ENCODE measurements at regions of chr12 and their contacts with region 1.

Region 1: DNA sequence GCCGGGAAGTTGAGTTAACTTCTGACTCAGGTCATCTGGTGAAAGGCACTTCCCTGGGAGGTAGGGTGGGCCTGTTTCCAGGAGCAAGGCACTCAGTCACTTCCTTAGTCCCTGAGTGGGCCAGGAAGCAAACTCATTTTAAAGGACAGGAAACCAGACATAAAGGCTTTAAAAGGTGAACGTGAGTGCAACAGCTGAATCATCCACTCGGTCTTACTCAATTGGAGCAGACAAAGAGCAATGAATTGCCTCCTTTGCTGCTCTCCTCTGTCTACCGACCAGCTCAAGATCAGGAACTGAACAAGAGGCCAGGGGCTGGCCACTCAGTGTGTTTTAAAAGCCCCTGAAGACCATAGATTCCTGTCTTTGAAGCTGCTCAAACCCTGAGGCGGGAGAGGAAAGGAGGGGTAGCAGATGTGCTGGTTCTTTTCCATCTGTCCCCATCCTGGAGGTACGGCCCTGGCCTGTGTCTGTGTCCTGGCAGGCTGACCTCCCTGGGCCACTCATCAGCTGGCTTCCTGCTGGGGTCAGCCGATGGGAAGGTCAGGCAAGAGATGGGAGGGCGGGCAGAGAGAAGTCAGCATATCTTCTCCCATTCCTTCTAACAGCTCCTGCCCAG is 148.9 kb downstream of the PPM1H start:
- DNase-seq: no peak
- ATAC-seq: peak; percentile 59

Region 2: GRCh38 chr12:62724947-62725447 is 61.1 kb before region 1 on chr12:
- intact Hi-C with region 1: loop called (anchors 10 kb)
- DNase-seq: no peak
- ATAC-seq: peak; percentile 78

Region 3: GRCh38 chr12:62866451-62867082 is 80.5 kb after region 1 on chr12:
- intact Hi-C with region 1: no loop called
- DNase-seq: no peak
- ATAC-seq: peak; percentile 60

Region 4: DNA sequence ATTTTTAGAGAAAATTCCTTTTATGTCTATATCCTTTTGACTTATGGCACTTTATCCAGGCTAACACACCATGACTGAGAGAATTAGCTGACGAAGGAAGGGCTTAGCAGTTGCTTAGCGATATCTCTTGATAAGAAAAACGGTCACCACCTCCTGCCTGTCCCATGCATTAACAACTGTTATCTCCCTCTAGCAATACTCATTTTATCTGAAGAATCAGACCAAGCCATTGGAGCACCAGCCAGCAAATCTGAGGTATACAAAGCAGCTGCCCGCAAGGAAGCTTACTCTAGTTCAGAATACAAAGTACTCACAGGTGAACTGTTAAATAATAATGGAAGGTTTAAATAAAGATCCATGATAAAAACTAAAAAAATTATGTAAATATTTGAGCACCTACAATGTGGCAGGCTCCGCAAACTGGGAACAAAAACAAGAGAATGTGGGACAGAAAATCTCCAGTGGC is 124.6 kb after region 1 on chr12:
- intact Hi-C with region 1: no loop called
- DNase-seq: no peak
- ATAC-seq: no peak

Measured in Right ventricle myocardium superior (tissue), 1 donor.